ENCODE measurements at regions of chr6 and their contacts with region 1.

Region 1: DNA sequence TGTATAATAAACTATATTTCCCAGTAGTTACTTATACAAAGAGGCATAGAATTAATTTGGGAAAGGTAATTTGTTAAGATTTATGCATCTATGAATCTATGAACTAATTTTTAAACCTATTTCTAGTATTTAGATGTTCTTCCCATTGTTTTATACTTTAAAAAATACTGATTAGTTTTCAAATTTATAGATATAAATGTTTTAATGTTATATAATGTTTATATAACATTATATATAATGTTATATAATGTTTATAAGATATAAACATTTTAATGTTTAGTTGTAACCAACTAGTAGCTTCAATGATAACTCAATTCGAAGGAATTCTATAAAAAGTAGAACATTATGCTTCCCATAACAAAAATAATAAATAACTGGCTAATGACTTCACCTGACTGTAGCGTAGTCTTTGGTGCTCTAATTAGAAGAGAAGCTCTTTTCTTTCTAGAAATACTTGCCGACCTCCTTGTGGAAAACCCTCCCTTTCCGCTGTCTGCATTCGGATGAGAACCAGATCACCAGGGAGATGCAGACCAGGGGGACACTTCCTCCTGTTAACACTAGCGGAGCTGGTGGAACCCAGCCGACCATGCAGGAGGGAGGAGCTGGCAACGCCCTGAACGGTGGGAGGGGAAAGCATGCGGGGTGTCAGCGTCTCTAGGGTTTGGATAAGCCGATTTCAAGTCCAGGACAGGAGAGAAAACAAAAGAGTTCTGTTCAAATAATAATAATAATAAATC is 158.4 kb downstream of the OR2B2 start:
- DNase-seq: peak; percentile 37 to 71
- H3K4me3 ChIP-seq: peak overlapping the region; percentile 65 to 74
- H3K27ac ChIP-seq: no peak overlapping the region
- H3K4me1 ChIP-seq: peaks cover 0 to 11% (median 7%) of the 10 kb centered on the region in 4 donors
- H3K27me3 ChIP-seq: peaks cover 0 to 21% of the 10 kb centered on the region in 2 donors
- CTCF ChIP-seq: no peak

Region 2: GRCh38 chr6:27518881-27519795 is 234.7 kb before region 1 on chr6:
- intact Hi-C with region 1: loop called (anchors 10 kb)
- DNase-seq: peak; percentile 64 to 76
- H3K4me3 ChIP-seq: peak overlapping the region; percentile 61 to 82
- H3K27ac ChIP-seq: peak overlapping the region; percentile 81 to 95
- H3K4me1 ChIP-seq: peaks cover 0 to 8% (median 6%) of the 10 kb centered on the region in 4 donors
- H3K27me3 ChIP-seq: no peaks in the 10 kb centered on the region
- CTCF ChIP-seq: peak; percentile 58 to 70

Region 3: GRCh38 chr6:27601668-27602254 is 152.1 kb before region 1 on chr6:
- intact Hi-C with region 1: no loop called
- DNase-seq: no peak
- H3K4me3 ChIP-seq: no peak overlapping the region
- H3K27ac ChIP-seq: no peak overlapping the region
- H3K4me1 ChIP-seq: no peaks in the 10 kb centered on the region
- H3K27me3 ChIP-seq: peaks cover 0 to 63% of the 10 kb centered on the region in 2 donors
- CTCF ChIP-seq: no peak

Measured in tibial artery (tissue), 4 donors.